Adrenal gland (tissue), 19 donors: ENCODE measurements at regions of chr16 and their contacts with region 1.

Region 1: GRCh38 chr16:54286090-54286993 is at the start of gene IRX3:
- DNase-seq: peak; percentile 56 to 85 (median 73)
- H3K4me3 ChIP-seq: peak within 1 kb of the TSS in 2 of 4 donors; percentile 49 to 61
- H3K27ac ChIP-seq: peak within 1 kb of the TSS in 3 of 5 donors; percentile 37 to 88 (median 57)
- H3K4me1 ChIP-seq: peaks cover 14 to 27% of the 10 kb centered on the region in 2 donors
- H3K27me3 ChIP-seq: peaks cover 91% of the 10 kb centered on the region
- CTCF ChIP-seq: no peak
- POLR2A ChIP-seq: peak; percentile 18 to 46
- total RNA-seq, gene IRX3: 2.7 to 18.6 (median 11.0) TPM

Region 2: DNA sequence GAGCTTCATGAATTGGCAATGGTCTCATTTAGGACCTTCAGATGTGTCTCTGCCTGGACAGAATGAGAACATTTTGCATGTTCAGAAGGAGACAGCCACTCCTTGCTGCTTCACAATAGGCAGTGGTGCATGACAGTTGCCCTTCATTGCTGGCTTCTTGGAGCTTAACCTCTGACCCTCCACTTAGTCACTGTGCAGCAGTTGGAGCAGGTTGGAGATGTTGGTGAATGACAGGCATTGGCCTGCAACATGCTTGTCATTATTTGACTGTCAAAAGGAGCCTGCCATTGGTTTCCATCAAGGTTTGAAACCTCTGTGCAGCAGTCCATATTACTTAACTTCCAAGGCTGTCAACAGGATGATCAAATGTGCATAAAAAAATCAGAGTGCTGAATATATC is 559.7 kb before region 1 on chr16:
- intact Hi-C with region 1: no loop called
- DNase-seq: peak in 2 of 7 donors; percentile 16
- H3K4me3 ChIP-seq: no peak overlapping the region
- H3K27ac ChIP-seq: no peak overlapping the region
- H3K4me1 ChIP-seq: peaks cover 14 to 21% of the 10 kb centered on the region in 2 donors
- H3K27me3 ChIP-seq: no peaks in the 10 kb centered on the region
- CTCF ChIP-seq: no peak
- POLR2A ChIP-seq: no peak

Region 3: GRCh38 chr16:54929090-54930004 is 643.0 kb after region 1 on chr16:
- intact Hi-C with region 1: loop called (anchors 5 to 10 kb)
- DNase-seq: peak; percentile 98 to 100 (median 99)
- H3K4me3 ChIP-seq: peak overlapping the region in 2 of 4 donors; percentile 46 to 67
- H3K27ac ChIP-seq: peak overlapping the region in 3 of 5 donors; percentile 39 to 82 (median 78)
- H3K4me1 ChIP-seq: peaks cover 10 to 18% of the 10 kb centered on the region in 2 donors
- H3K27me3 ChIP-seq: peaks cover 68% of the 10 kb centered on the region
- CTCF ChIP-seq: peak in 1 of 6 experiments; percentile 8
- POLR2A ChIP-seq: no peak